ENCODE measurements at regions of chr12 and their contacts with region 1.

Region 1: DNA sequence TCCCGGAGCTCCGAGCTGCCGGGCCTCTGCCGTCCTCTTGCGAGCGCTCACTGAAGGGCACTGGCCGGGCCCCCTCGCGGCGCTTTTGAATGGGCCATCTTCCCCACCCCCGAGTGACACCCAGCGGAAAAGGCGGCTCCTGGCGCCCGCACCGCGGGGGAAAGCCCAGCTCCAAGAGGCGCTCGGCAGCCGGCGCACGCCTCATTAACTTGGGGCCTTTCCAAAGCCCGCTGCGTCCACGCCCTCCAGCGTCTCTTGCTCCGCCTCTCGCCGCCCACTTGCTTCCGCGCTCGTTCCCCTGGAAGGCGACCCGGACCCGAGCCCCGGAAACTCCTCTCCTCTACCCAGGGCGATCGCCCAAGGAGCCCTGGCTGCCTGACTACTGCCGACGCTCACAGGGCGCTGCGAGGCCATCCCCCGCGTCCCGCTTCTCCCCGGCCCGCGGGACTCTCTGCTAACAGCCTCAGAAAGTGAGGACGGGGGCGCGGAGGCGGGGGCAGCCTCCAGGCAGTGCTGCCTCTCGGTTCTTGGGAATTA is at the start of gene PHLDA1:
- DNase-seq: peak; percentile 56 to 97 (median 69)
- ATAC-seq: peak; percentile 91
- H3K4me3 ChIP-seq: peak within 1 kb of the TSS; percentile 76
- H3K4me3 Mint-ChIP-seq: peak within 1 kb of the TSS; percentile 85 to 98 (median 93)
- H3K27ac ChIP-seq: peak within 1 kb of the TSS; percentile 74
- H3K27ac Mint-ChIP-seq: peak within 1 kb of the TSS; percentile 74 to 98 (median 82)
- H3K4me1 ChIP-seq: peaks cover 5% of the 10 kb centered on the region in 2 donors
- H3K4me1 Mint-ChIP-seq: peaks cover 5 to 57% (median 23%) of the 10 kb centered on the region in 7 donors
- H3K27me3 ChIP-seq: no peaks in the 10 kb centered on the region
- H3K27me3 Mint-ChIP-seq: peaks cover 0 to 5% (median 0%) of the 10 kb centered on the region in 5 donors
- total RNA-seq, gene PHLDA1: 1.1 to 25.1 (median 4.6) TPM

Region 2: GRCh38 chr12:74689071-74689655 is 1342.4 kb before region 1 on chr12:
- CTCF ChIA-PET with region 1: no interaction called
- POLR2A ChIA-PET with region 1: no interaction called
- intact Hi-C with region 1: loop called in 1 of 2 experiments (anchors 10 kb)
- DNase-seq: peak in 6 of 9 donors; percentile 1 to 41 (median 6)
- ATAC-seq: no peak
- H3K4me3 ChIP-seq: no peak overlapping the region
- H3K4me3 Mint-ChIP-seq: no peak overlapping the region
- H3K27ac ChIP-seq: no peak overlapping the region
- H3K27ac Mint-ChIP-seq: no peak overlapping the region
- H3K4me1 ChIP-seq: no peaks in the 10 kb centered on the region
- H3K4me1 Mint-ChIP-seq: no peaks in the 10 kb centered on the region
- H3K27me3 ChIP-seq: no peaks in the 10 kb centered on the region
- H3K27me3 Mint-ChIP-seq: no peaks in the 10 kb centered on the region

Region 3: DNA sequence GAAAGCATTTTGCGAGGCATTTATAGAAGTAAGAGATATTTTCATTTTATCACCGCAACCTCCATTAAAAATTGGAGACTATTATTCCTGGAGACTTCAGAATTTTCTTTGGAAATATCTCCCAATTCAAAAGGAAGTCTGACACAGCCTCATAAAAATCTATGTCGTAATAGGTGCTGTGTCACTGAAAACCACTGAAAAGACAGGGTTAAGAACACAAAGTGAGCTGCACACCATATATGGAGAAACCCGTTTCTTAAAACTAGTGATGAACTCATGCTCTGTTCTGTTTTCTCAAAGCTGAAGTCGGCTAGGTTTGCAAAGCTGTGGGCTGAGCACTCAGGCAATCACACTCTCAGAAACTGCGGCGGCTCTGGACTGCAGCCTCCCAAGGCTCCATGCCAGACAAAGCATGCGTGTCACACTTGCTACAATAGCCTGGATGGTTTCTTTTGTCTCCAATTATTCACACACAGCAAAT is 551.1 kb before region 1 on chr12 and contains the start of gene GLIPR1:
- CTCF ChIA-PET with region 1: interaction called, 4 read pairs
- POLR2A ChIA-PET with region 1: interaction called, 3 read pairs
- intact Hi-C with region 1: loop called in 1 of 2 experiments (anchors 1 kb)
- DNase-seq: peak; percentile 54 to 83 (median 76)
- ATAC-seq: peak; percentile 86
- H3K4me3 ChIP-seq: peak within 1 kb of the TSS; percentile 82
- H3K4me3 Mint-ChIP-seq: peak within 1 kb of the TSS; percentile 86 to 99 (median 97)
- H3K27ac ChIP-seq: peak within 1 kb of the TSS; percentile 73
- H3K27ac Mint-ChIP-seq: peak within 1 kb of the TSS; percentile 92 to 100 (median 97)
- H3K4me1 ChIP-seq: peaks cover 49 to 54% of the 10 kb centered on the region in 2 donors
- H3K4me1 Mint-ChIP-seq: peaks cover 50 to 85% (median 75%) of the 10 kb centered on the region in 7 donors
- H3K27me3 ChIP-seq: no peaks in the 10 kb centered on the region
- H3K27me3 Mint-ChIP-seq: no peaks in the 10 kb centered on the region
- total RNA-seq, gene GLIPR1: 28.2 to 132 (median 48.7) TPM

Region 4: GRCh38 chr12:75722714-75723200 is 308.8 kb before region 1 on chr12:
- CTCF ChIA-PET with region 1: no interaction called
- POLR2A ChIA-PET with region 1: no interaction called
- intact Hi-C with region 1: loop called (anchors 5 kb)
- DNase-seq: peak in 1 of 9 donors; percentile 26
- ATAC-seq: peak; percentile 72
- H3K4me3 ChIP-seq: no peak overlapping the region
- H3K4me3 Mint-ChIP-seq: peak overlapping the region in 2 of 10 donors; percentile 2 to 44
- H3K27ac ChIP-seq: no peak overlapping the region
- H3K27ac Mint-ChIP-seq: peak overlapping the region in 3 of 9 donors; percentile 77 to 84 (median 78)
- H3K4me1 ChIP-seq: peaks cover 3 to 7% of the 10 kb centered on the region in 2 donors
- H3K4me1 Mint-ChIP-seq: peaks cover 11 to 18% (median 13%) of the 10 kb centered on the region in 7 donors
- H3K27me3 ChIP-seq: no peaks in the 10 kb centered on the region
- H3K27me3 Mint-ChIP-seq: peaks cover 0 to 9% (median 5%) of the 10 kb centered on the region in 5 donors

Region 5: DNA sequence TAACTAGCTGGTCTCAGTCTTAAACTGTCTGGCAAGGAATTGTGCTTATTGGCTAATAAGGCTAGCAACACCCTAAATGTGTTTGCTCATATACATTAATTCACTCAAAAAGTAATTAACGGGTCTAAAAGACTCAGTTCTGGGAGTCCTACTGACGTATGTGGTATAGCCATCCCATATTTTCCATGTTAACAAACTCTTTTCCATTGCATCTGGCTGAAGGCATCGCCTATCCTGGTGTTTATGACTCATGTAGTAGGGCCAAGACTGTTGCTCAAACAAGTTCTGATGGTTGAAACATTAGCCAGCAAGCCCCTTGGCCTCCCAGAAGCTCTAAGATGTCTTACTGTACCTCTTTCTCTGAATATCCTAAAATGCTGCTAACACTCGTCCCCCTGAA is 98.5 kb before region 1 on chr12:
- CTCF ChIA-PET with region 1: no interaction called
- POLR2A ChIA-PET with region 1: no interaction called
- intact Hi-C with region 1: loop called in 1 of 2 experiments (anchors 1 kb)
- DNase-seq: no peak
- ATAC-seq: no peak
- H3K4me3 ChIP-seq: no peak overlapping the region
- H3K4me3 Mint-ChIP-seq: no peak overlapping the region
- H3K27ac ChIP-seq: no peak overlapping the region
- H3K27ac Mint-ChIP-seq: no peak overlapping the region
- H3K4me1 ChIP-seq: peaks cover 0 to 14% of the 10 kb centered on the region in 2 donors
- H3K4me1 Mint-ChIP-seq: peaks cover 0 to 26% (median 9%) of the 10 kb centered on the region in 7 donors
- H3K27me3 ChIP-seq: no peaks in the 10 kb centered on the region
- H3K27me3 Mint-ChIP-seq: peaks cover 0 to 16% (median 2%) of the 10 kb centered on the region in 5 donors

Region 6: DNA sequence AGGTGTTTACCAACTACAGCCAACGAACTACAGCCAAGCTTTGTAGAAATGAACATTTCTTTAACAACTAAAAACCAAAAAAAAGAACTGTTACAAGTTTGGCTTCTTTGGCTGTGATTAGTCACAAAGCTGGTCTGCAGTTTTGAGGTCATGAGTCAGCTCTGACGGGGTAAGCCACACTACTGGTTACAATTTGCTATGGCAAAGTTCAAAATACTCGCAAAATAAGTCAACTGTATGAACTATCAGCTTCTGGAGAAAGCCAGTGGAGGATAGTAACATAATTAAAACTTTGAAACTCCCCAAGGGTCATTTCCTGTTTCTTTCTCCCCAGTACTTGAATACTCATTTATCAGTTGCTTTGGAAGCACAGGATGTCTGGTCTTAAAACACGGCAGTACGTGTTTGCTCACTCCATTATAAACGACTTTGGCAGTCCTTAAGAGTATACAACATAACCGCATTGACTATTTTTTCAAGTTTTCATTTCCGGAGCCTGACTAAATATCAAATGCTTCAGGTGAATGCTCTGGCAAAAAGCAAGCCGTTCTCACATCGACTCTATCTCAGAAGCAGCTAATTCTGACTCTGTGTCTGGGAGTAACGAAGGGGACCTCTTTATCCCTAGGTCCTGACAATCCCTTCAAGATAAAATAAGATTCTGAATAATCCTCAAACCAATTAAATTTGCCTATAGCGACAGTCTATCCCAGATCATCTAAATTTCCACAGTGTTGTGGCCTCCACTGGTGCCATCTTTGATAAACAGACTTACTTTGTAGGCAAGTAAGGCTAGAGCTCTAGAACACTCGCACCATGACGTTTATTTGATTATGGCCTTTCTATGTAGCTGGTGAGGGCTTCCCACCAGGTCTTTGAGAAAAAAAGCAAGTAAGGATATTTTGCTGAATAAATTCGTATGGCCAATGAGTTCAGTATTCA is 10.6 kb before region 1 on chr12:
- CTCF ChIA-PET with region 1: interaction called, 4 read pairs
- POLR2A ChIA-PET with region 1: interaction called, 15 read pairs
- intact Hi-C with region 1: loop called (anchors 1 kb)
- DNase-seq: peak in 8 of 9 donors; percentile 32 to 65 (median 54)
- ATAC-seq: peak; percentile 87
- H3K4me3 ChIP-seq: peak overlapping the region; percentile 21
- H3K4me3 Mint-ChIP-seq: peak overlapping the region in 9 of 10 donors; percentile 33 to 74 (median 67)
- H3K27ac ChIP-seq: peak overlapping the region; percentile 43
- H3K27ac Mint-ChIP-seq: peak overlapping the region; percentile 84 to 98 (median 90)
- H3K4me1 ChIP-seq: peaks cover 15 to 17% of the 10 kb centered on the region in 2 donors
- H3K4me1 Mint-ChIP-seq: peaks cover 6 to 56% (median 21%) of the 10 kb centered on the region in 7 donors
- H3K27me3 ChIP-seq: no peaks in the 10 kb centered on the region
- H3K27me3 Mint-ChIP-seq: no peaks in the 10 kb centered on the region

Region 7: GRCh38 chr12:76763743-76764675 is 732.4 kb after region 1 on chr12 and contains the start of gene ZDHHC17:
- CTCF ChIA-PET with region 1: no interaction called
- POLR2A ChIA-PET with region 1: interaction called, 4 read pairs
- intact Hi-C with region 1: loop called (anchors 2 to 5 kb)
- DNase-seq: peak; percentile 90 to 95 (median 93)
- ATAC-seq: peak; percentile 90
- H3K4me3 ChIP-seq: peak within 1 kb of the TSS; percentile 84
- H3K4me3 Mint-ChIP-seq: peak within 1 kb of the TSS; percentile 92 to 98 (median 97)
- H3K27ac ChIP-seq: peak within 1 kb of the TSS; percentile 94
- H3K27ac Mint-ChIP-seq: peak within 1 kb of the TSS; percentile 95 to 99 (median 97)
- H3K4me1 ChIP-seq: peaks cover 8 to 13% of the 10 kb centered on the region in 2 donors
- H3K4me1 Mint-ChIP-seq: peaks cover 17 to 57% (median 46%) of the 10 kb centered on the region in 7 donors
- H3K27me3 ChIP-seq: no peaks in the 10 kb centered on the region
- H3K27me3 Mint-ChIP-seq: peaks cover 0 to 13% (median 0%) of the 10 kb centered on the region in 5 donors
- total RNA-seq, gene ZDHHC17: 27.3 to 60.9 (median 56.3) TPM

Measured in naive thymus-derived CD4-positive, alpha-beta T cell (primary cell).